ENCODE measurements at regions of chr7 and their contacts with region 1.

Region 1: DNA sequence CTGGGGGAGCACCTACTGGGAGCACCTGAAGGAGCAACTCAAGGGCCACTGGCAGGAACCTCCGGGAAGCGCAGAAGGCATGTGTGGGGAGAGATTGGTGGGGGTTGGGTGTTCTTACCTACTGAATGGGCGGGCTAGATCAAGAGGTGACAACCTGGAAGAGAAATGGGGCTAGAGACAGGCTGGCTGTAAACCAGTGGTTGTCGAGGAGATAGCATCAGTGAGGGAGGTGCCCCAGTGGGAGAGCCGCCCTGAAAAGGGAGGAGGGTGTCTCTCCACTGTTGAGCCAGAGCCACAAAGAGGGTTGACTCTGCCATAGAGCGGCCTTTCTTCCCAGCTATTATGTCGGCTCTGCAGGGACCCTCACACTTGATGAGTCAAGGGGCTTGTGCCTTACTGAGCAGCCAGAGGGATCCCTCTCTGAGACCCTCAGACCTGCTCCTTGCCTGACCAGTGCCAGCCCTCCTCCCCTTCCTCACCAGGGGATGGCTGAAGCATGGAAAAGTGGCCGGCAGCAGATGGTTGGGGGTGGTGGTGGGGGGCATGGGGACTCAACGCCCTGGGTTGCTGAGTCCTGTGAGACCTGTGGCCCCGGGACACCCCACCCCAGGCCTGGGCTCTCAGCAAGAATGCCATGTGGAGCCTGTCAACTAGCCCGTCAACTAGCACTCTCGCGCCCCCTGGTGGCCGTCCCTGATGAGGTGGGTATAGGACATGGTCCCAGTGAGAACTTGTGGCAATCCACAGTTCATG is 36.5 kb upstream of the PURB start:
- DNase-seq: peak; percentile 97
- ATAC-seq: peak; percentile 98
- H3K4me3 Mint-ChIP-seq: no peak overlapping the region
- H3K27ac Mint-ChIP-seq: peak overlapping the region; percentile 39
- H3K4me1 Mint-ChIP-seq: peaks cover 25% of the 10 kb centered on the region
- H3K27me3 Mint-ChIP-seq: peaks cover 7% of the 10 kb centered on the region

Region 2: GRCh38 chr7:44650772-44651171 is 271.0 kb before region 1 on chr7:
- CTCF ChIA-PET with region 1: no interaction called
- POLR2A ChIA-PET with region 1: no interaction called
- DNase-seq: no peak
- ATAC-seq: no peak
- H3K4me3 Mint-ChIP-seq: no peak overlapping the region
- H3K27ac Mint-ChIP-seq: peak overlapping the region; percentile 22
- H3K4me1 Mint-ChIP-seq: peaks cover 1% of the 10 kb centered on the region
- H3K27me3 Mint-ChIP-seq: no peaks in the 10 kb centered on the region

Region 3: DNA sequence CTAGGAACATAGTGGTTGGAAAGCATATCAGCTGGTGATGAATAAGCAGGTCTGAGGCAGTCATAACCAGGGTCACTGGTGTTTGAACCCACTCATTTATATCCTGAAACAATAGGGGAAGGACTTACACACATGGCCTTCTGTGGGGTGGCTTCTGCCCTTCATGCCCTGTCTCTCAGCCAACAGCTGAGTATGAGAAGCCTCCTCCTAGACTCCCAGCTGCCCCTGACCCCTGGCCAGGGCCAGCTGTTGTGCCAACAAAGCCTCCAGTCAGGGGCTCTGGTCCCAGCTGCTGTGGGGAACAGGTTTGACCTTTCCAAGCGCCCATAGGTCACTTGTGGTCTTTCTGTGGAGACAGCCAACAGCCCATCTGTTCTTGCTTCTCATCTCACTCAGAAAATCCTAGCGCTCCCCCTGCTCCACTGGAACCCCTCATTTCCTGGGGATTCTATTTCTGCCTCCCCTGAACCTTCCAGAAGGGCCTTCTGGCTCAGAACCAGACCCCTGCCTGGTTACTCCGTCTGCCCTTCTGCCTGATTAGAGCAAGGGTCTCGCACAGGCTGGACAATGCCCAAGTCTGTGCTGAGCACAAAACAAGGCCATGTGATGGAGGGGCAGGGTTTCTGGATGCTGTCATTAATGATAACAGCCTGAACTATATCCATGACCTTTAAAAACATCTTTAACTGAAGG is 26.7 kb before region 1 on chr7:
- CTCF ChIA-PET with region 1: interaction called, 14 read pairs
- POLR2A ChIA-PET with region 1: interaction called, 4 read pairs
- DNase-seq: no peak
- ATAC-seq: no peak
- H3K4me3 Mint-ChIP-seq: no peak overlapping the region
- H3K27ac Mint-ChIP-seq: no peak overlapping the region
- H3K4me1 Mint-ChIP-seq: peaks cover 27% of the 10 kb centered on the region
- H3K27me3 Mint-ChIP-seq: no peaks in the 10 kb centered on the region